Activated naive CD4-positive, alpha-beta T cell treated with anti-CD3 and anti-CD28 coated beads, Interleukin-2, amount 10 ng/mL, durations not matched to agents 7 days and 5 days (primary cell): ENCODE measurements at regions of chr7 and their contacts with region 1.

Region 1: DNA sequence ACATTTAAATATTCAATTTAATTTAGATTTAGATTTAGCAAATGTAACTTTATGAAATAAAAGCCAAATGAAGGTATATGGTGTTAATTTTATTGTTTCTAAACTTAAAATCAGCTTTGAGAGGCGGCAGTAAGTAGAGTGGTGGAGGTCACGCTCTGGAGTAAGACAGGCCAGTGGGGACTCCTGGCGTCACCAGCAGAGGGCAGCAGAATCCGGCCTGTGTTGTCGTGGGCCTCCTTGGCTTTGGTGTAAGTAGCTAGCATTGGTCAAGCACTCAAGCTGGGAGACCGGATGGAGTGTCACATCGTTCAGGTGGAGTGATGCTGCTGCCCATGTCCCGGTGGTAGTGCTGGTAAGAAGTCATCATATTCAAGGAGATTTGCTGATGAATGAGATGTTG is 98.7 kb upstream of the DNAJB6 start:
- DNase-seq: no peak
- H3K4me3 Mint-ChIP-seq: no peak overlapping the region
- H3K27ac Mint-ChIP-seq: no peak overlapping the region
- H3K4me1 Mint-ChIP-seq: no peaks in the 10 kb centered on the region
- H3K27me3 Mint-ChIP-seq: no peaks in the 10 kb centered on the region

Region 2: DNA sequence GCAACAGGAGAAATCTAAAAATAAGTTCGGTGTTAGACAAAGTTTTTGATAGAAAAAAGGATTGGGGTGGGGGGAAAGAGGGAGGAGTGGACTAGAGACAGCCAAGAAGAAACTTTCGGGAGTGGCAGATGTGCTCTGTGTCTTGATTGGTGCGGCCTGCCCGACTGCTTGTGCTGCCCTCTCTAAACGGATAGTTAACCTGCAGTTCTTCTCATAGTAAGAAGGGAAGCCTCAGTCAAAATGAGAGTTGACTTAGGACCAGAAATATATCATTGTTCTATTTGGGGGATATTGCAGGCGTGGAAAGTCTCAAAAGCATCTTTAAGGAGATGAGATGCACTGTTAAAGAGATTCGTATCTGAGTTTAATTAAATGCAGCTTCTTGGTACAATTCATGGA is 60.1 kb before region 1 on chr7:
- CTCF ChIA-PET with region 1: no interaction called
- DNase-seq: no peak
- H3K4me3 Mint-ChIP-seq: no peak overlapping the region
- H3K27ac Mint-ChIP-seq: no peak overlapping the region
- H3K4me1 Mint-ChIP-seq: no peaks in the 10 kb centered on the region
- H3K27me3 Mint-ChIP-seq: no peaks in the 10 kb centered on the region

Region 3: GRCh38 chr7:157250605-157251228 is 12.6 kb after region 1 on chr7:
- CTCF ChIA-PET with region 1: interaction called, 16 read pairs
- DNase-seq: peak; percentile 61
- H3K4me3 Mint-ChIP-seq: no peak overlapping the region
- H3K27ac Mint-ChIP-seq: no peak overlapping the region
- H3K4me1 Mint-ChIP-seq: no peaks in the 10 kb centered on the region
- H3K27me3 Mint-ChIP-seq: no peaks in the 10 kb centered on the region